ENCODE measurements at regions of chr10 and their contacts with region 1.

Region 1: DNA sequence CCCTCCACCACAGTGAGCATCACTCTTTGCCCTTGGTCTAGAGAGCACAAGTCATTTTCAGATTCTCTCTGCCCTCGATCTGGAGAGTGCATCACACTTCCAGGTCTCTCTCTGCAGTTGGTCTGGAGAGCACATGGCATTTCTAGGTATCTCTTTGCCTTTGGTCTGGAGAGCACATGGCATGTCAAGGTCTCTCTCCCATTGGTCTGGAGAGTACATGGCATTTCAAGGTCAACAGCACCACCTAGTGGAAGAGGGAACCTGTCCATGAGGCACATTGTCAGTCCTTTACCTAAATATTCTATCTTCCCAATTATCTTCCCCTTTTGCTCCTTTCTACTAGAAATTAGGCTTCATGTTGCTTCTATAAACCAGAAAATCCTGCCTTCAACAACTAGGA is 1139.4 kb downstream of the XPNPEP1 start:
- DNase-seq: no peak
- ATAC-seq: no peak
- H3K4me3 Mint-ChIP-seq: no peak overlapping the region
- H3K27ac Mint-ChIP-seq: no peak overlapping the region
- H3K4me1 Mint-ChIP-seq: no peaks in the 10 kb centered on the region
- H3K27me3 Mint-ChIP-seq: no peaks in the 10 kb centered on the region
- CTCF ChIP-seq: no peak

Region 2: DNA sequence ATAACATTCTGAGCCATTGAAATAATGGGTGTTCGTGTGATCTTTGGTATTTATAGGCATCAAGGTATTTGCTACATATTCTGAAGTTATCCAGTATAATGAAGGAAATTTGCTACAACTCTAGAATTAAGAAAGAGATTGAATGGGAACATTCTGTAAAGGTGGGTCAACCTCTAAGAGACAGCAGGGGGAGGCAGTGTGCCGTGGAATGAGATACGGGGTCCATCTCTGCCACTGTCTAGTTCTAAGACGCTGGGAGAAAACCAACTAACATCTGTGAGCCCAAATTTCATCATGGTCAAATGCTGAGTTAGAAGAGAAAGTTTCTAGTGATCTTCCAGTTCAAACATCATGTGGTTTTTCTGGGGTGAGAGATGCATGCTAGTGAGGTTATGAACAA is 1988.3 kb before region 1 on chr10:
- CTCF ChIA-PET with region 1: no interaction called
- POLR2A ChIA-PET with region 1: no interaction called
- intact Hi-C with region 1: loop called (anchors 5 kb)
- DNase-seq: no peak
- ATAC-seq: no peak
- H3K4me3 Mint-ChIP-seq: no peak overlapping the region
- H3K27ac Mint-ChIP-seq: no peak overlapping the region
- H3K4me1 Mint-ChIP-seq: no peaks in the 10 kb centered on the region
- H3K27me3 Mint-ChIP-seq: no peaks in the 10 kb centered on the region
- CTCF ChIP-seq: no peak

Region 3: DNA sequence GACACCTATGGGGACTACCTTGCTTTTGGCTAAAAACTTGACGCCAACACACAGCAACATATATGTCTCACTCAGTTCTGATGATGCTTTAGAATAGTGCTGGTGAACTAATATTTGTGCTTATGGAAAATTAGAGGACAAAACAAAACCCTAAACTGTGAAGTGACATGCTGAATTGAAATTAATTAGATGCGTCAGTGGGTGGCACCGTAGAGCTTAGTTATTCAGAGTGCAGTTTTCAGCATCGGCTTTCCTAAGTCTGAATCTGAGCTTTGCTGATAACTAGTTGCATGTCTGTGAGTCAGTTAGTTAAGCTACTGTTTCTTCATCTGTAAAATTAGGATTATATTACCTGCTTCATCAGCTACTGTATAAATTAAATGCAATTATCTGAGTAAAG is 1374.4 kb before region 1 on chr10:
- CTCF ChIA-PET with region 1: no interaction called
- POLR2A ChIA-PET with region 1: no interaction called
- intact Hi-C with region 1: loop called (anchors 2 kb)
- DNase-seq: no peak
- ATAC-seq: peak; percentile 40
- H3K4me3 Mint-ChIP-seq: no peak overlapping the region
- H3K27ac Mint-ChIP-seq: no peak overlapping the region
- H3K4me1 Mint-ChIP-seq: no peaks in the 10 kb centered on the region
- H3K27me3 Mint-ChIP-seq: no peaks in the 10 kb centered on the region
- CTCF ChIP-seq: no peak

Measured in activated B cell treated with CpG ODN at 0.5 μM for 24 hours (primary cell).